BJ (cell line): ENCODE measurements at regions of chr11 and their contacts with region 1.

Region 1: DNA sequence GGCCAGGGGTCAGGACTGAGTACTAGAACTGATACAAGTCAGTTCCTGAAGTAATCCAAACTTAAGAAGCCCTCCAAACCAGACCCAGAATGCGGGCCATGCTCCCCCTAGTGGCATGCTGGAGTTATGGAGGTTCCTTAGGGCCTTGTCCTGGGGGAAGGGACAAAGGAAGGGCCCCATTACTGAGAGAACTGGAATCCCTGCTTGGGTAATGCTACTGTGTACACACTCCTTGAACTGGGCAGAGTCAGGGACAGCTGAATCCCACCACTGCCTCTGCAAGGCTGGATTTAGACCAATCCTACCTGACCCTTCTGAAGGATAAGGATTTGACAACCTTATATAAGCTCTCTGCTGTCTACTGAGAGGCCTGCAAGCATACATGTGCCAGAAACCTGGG is 97.3 kb upstream of the AKIP1 start:
- DNase-seq: no peak
- H3K4me3 ChIP-seq: no peak overlapping the region
- H3K27me3 ChIP-seq: no peaks in the 10 kb centered on the region
- CTCF ChIP-seq: peak; percentile 92

Region 2: GRCh38 chr11:8080674-8081590 is 732.7 kb before region 1 on chr11 and contains the start of gene TUB:
- CTCF ChIA-PET with region 1: no interaction called
- POLR2A ChIA-PET with region 1: no interaction called
- DNase-seq: no peak
- H3K4me3 ChIP-seq: peak within 1 kb of the TSS; percentile 62
- H3K27me3 ChIP-seq: no peaks in the 10 kb centered on the region; the same call in 1 of the 2 replicates
- CTCF ChIP-seq: 0 out of 2 replicates have a peak, but pooled peaks have one; percentile 13
- polyA plus RNA-seq, gene TUB: 9.8 and 11.8 TPM in 2 replicates

Region 3: GRCh38 chr11:8717876-8718753 is 95.5 kb before region 1 on chr11:
- CTCF ChIA-PET with region 1: interaction called, 13 read pairs
- POLR2A ChIA-PET with region 1: no interaction called
- DNase-seq: peak; percentile 79
- H3K4me3 ChIP-seq: peak overlapping the region; percentile 4; the same call in 1 of the 2 replicates
- H3K27me3 ChIP-seq: no peaks in the 10 kb centered on the region
- CTCF ChIP-seq: no peak

Region 4: GRCh38 chr11:8826139-8826786 is 12.6 kb after region 1 on chr11:
- CTCF ChIA-PET with region 1: interaction called, 17 read pairs
- POLR2A ChIA-PET with region 1: interaction called, 4 read pairs
- DNase-seq: no peak
- H3K4me3 ChIP-seq: no peak overlapping the region
- H3K27me3 ChIP-seq: no peaks in the 10 kb centered on the region
- CTCF ChIP-seq: no peak

Region 5: DNA sequence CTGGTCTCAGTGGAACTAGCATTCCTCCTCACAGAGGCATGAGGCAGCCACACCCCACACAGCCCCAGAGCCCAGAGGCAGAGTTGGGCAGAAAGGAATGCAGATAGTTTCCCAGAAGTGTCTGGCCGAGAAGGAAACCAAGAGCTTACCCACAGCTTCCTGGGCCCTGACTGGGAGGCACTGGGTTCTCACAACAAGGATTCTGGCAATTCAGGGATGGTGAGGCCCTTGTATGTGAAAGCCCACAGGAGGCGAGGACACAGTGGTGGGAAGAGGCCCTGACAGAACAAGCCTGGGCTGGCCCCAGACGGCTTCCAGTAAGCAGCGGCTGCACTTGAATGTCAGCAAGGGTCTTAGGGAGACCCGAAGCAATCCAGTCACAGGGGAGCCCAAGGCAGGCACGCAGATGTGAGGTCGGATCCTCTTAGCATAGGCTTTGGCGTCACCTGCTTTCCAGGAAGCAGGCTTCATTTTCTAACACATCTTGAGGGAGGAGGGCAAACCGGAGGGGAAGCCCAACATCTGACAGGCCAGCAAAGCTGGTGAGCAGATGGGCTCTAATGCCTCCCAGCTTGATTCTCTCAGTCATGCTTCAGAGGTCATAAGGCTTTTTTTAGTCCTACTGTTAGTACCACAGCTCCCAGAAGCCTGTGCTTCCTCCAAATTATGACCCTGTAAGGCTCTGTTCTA is 19.1 kb after region 1 on chr11:
- CTCF ChIA-PET with region 1: interaction called, 19 read pairs
- POLR2A ChIA-PET with region 1: no interaction called
- DNase-seq: peak; percentile 84
- H3K4me3 ChIP-seq: no peak overlapping the region
- H3K27me3 ChIP-seq: no peaks in the 10 kb centered on the region
- CTCF ChIP-seq: no peak

Region 6: DNA sequence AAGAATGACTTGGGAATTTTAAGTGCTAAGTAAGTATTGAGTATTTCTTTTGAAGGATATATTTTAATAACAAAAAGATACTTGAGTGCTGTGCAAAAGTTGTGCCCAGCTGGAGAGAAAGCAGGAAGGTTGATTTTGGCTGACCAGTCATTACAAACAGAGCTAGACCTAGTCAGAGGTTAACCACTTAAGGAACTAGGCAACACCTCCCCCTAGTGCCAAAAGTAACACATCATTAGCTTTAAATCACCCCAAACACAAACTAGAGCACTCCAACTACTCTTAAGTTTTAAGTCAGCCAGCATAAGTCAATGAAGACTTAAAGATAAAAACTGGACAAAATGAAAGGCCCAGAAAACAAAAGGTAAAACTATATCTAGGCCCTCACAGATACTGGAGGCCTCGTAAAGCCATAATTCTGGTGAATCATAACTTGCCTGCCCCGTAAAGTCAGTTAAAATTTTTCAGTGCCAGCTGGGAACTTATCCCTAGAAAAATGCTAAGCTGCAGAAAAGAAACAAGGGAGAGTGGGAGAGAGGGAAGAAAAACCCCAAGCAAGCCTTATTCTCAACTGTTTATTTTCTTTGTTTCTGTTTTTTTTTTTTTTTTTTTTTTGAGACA is 146.0 kb after region 1 on chr11:
- CTCF ChIA-PET with region 1: interaction called, 13 read pairs
- POLR2A ChIA-PET with region 1: interaction called, 4 read pairs
- DNase-seq: peak; percentile 22
- H3K4me3 ChIP-seq: no peak overlapping the region
- H3K27me3 ChIP-seq: no peaks in the 10 kb centered on the region
- CTCF ChIP-seq: peak; percentile 66